Ovary (tissue), 10 donors: ENCODE measurements at regions of chr9 and their contacts with region 1.

Region 1: DNA sequence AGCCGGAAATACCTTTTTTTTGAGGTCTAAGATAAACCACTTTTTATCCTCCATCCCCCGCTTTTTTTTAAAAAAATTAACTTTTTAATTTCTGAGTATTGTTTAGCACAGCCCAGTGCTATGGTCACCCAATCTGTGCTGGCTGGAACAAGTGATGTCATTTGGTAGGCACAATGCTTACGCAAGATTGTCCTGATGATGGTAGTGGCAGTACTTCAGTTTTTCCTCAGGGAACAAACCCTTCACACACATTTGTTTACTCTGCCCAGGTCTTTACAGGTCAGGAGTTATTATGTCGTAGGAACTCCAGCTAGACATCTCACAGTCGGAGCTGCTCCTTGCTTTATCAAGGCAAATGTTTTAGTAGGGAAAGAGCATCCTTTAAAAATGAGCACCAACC is 20.6 kb upstream of the PTCH1 start:
- DNase-seq: no peak
- H3K4me3 ChIP-seq: no peak overlapping the region
- H3K27ac ChIP-seq: no peak overlapping the region
- H3K4me1 ChIP-seq: no peaks in the 10 kb centered on the region
- H3K27me3 ChIP-seq: no peaks in the 10 kb centered on the region
- CTCF ChIP-seq: no peak
- EP300 ChIP-seq: no peak
- POLR2A ChIP-seq: no peak

Region 2: GRCh38 chr9:95588724-95589652 is 51.7 kb after region 1 on chr9:
- intact Hi-C with region 1: loop called in 1 of 4 experiments (anchors 5 kb)
- DNase-seq: no peak
- H3K4me3 ChIP-seq: no peak overlapping the region
- H3K27ac ChIP-seq: no peak overlapping the region
- H3K4me1 ChIP-seq: no peaks in the 10 kb centered on the region
- H3K27me3 ChIP-seq: no peaks in the 10 kb centered on the region
- CTCF ChIP-seq: no peak
- EP300 ChIP-seq: no peak
- POLR2A ChIP-seq: no peak